AG04450 (cell line): ENCODE measurements at regions of chr11 and their contacts with region 1.

Region 1: GRCh38 chr11:131748151-131749050 is 378.0 kb downstream of the NTM start:
- DNase-seq: no peak
- H3K4me3 ChIP-seq: no peak overlapping the region
- H3K27ac ChIP-seq: peak overlapping the region; percentile 77
- H3K27me3 ChIP-seq: no peaks in the 10 kb centered on the region
- CTCF ChIP-seq: peak; percentile 90

Region 2: DNA sequence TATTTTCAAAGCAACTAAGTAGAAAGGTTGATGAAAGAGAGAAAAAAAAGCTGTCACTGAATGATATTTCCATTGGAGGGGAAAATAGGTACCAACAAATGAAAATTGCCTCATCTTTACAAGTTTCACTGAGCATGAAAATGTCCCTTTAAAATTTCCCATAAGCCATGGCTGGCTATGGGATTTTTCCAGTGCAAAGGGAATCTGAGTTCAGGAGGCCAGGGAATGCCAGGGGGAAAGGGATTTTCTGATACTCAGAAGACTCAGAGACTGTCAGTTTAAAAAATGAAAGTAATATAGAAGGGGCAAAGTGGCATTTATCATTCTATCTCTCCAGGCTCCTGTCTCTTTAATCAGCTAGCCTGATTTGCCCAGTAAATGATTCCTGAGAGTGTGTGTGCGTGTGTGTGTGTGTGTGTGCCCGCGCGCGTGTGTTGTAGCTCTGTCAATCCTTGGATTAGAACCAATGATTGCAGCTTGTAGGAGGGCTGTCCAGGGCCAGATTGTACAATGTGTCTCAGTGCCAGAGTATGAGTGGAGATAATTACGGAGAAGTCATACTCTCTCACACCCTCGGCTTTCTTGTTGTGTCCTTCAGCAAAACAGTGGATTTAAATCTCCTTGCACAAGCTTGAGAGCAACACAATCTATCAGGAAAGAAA is 378.2 kb before region 1 on chr11 and contains the start of gene NTM:
- CTCF ChIA-PET with region 1: no interaction called
- POLR2A ChIA-PET with region 1: no interaction called
- DNase-seq: no peak
- H3K4me3 ChIP-seq: no peak within 1 kb of the TSS
- H3K27ac ChIP-seq: no peak within 1 kb of the TSS
- H3K27me3 ChIP-seq: peaks cover 26% of the 10 kb centered on the region
- CTCF ChIP-seq: no peak
- polyA plus RNA-seq, gene NTM: 26.9 and 28.3 TPM in 2 replicates

Region 3: DNA sequence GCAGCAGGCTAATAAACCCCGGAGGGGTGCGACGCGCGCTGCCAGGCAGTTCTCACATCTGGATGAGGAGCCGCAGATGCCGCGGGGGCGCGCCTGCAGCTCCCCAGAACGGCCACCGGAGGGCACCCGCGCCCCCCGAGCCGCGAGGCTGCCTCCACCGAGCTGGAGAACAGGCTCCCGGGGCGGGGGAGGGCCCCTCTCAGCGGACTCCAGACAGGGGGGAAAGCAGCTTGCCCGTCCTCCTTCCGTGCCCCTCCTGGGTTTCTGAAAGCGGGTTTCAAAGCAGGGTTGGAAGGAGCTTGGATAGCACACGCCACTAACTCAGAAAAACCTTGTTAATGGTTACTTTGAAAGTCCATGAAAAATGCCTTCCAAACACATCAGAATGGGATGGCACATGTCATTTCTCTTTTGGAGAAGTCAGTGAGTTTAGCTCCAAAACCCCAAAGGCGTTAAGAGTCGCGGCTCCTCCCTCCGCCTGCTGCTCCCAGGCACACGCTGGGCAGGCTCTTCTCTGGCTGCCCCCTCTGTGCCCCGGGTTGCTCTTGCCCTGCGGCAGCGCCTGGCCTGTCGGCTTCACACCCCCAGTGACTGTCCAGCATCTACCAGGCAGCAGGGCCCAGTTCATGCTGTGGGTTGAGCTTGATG is 60.2 kb before region 1 on chr11:
- CTCF ChIA-PET with region 1: interaction called, 66 read pairs
- POLR2A ChIA-PET with region 1: interaction called, 3 read pairs
- DNase-seq: no peak
- H3K4me3 ChIP-seq: peak overlapping the region; percentile 46
- H3K27ac ChIP-seq: no peak overlapping the region
- H3K27me3 ChIP-seq: peaks cover 11% of the 10 kb centered on the region
- CTCF ChIP-seq: peak; percentile 89

Region 4: DNA sequence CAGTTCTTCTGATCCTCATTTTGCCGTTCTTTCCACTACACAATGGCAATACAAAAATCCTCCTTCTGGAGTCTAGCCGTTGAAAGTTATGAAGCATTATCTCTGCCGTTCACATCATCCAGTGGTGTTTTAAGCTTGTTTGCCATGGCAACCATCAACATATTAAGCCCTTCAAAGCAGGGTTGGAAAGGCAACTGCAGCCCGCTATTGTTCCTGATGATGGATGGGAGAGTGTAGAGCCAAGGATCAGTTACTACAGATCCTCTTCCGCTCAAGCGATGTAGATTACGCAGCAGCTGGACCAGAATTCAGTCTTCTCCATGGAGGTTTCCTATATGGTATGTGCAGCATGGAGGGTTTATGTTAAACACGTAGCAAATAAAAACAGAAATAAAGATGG is 25.3 kb before region 1 on chr11:
- CTCF ChIA-PET with region 1: interaction called, 14 read pairs
- POLR2A ChIA-PET with region 1: no interaction called
- DNase-seq: no peak
- H3K4me3 ChIP-seq: no peak overlapping the region
- H3K27ac ChIP-seq: no peak overlapping the region
- H3K27me3 ChIP-seq: peaks cover 23% of the 10 kb centered on the region
- CTCF ChIP-seq: no peak

Region 5: DNA sequence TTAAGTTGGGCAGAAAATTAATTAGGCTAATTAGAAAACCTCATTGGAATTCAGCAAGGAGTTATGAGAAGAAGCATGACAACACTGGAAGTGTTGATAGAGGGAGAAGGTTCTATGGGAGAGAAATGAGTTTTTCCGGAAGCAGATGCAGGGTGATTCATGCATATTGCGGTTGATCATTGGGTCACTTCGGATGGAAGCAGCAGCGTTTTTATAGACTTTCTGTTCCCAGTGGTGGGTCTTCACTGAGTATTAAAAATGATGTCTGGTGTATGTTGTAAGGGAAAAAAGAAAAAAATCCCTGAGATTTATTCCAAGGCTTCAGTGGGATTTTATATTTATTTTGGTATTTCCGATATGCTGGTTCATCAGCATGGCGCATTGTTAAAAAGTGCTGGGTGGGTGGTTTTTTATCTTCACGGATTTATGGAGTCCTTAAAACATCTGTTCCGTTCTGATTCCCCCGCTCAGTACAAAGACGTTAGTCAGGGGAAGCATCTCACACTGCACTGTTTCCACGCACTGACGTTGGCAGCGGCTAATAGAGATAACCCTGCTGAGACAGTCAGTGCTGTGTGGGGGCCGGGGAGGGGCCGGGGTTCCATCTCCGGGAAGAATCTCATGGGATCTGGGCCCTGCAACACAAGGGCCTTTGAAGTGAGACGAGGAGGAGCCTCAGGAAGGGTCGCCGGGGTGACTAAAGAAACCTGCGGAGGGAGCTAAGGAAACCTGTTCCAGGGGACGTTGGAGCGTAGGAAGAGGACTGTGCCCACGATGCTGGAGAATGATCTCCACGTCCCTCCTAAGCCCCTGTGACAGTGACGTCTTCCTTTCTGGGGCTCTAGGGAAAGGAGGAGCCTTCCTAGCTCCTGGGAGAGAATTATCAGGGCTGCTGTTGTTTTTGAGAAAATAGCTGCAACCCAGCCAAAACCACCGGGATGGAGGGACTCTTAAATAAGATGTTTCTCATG is 12.0 kb after region 1 on chr11:
- CTCF ChIA-PET with region 1: interaction called, 68 read pairs
- POLR2A ChIA-PET with region 1: interaction called, 3 read pairs
- DNase-seq: no peak
- H3K4me3 ChIP-seq: no peak overlapping the region
- H3K27ac ChIP-seq: peak overlapping the region; percentile 42
- H3K27me3 ChIP-seq: no peaks in the 10 kb centered on the region
- CTCF ChIP-seq: no peak

Region 6: GRCh38 chr11:131910523-131911387 is 162.4 kb after region 1 on chr11:
- CTCF ChIA-PET with region 1: interaction called, 18 read pairs
- POLR2A ChIA-PET with region 1: no interaction called
- DNase-seq: no peak
- H3K4me3 ChIP-seq: peak overlapping the region; percentile 88
- H3K27ac ChIP-seq: peak overlapping the region; percentile 25
- H3K27me3 ChIP-seq: no peaks in the 10 kb centered on the region
- CTCF ChIP-seq: no peak; the same call in 1 of the 2 replicates